Endothelial cell of umbilical vein (primary cell): ENCODE measurements at regions of chr11 and their contacts with region 1.

Region 1: GRCh38 chr11:130894322-130895025 is 21.8 kb downstream of the SNX19 start:
- DNase-seq: peak; percentile 90
- H3K4me3 ChIP-seq: no peak overlapping the region
- H3K27ac ChIP-seq: peak overlapping the region; percentile 13
- H3K4me1 ChIP-seq: peaks cover 57% of the 10 kb centered on the region
- H3K27me3 ChIP-seq: no peaks in the 10 kb centered on the region
- CTCF ChIP-seq: peak; percentile 72 to 86
- POLR2A ChIP-seq: no peak

Region 2: DNA sequence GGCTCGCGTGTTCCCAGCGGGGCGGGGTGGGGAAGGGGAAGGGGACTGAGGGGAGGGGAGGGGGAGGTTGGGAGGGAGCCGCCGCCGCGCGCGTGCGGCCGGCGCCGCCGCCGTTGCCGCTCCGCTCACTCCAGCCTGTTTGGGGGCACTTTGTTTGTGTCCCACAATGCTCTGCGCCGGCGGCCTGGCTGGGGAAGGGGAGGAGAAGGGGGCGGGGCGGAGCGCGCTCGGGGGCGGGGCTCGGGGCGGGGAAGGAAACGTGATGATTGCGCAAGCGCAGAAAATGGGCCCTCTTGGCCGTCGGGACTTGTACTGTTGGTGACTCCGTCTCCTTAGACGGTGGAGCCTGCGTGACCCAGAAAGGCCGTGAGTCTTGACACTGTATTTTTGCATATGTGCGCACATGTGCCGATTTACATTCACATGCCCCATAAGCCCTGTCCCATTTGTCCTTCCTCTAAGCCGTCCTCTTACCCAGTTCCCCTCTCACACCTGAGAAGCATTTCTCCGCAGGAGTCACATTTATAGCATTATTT is 579.7 kb before region 1 on chr11 and contains the start of gene ZBTB44:
- CTCF ChIA-PET with region 1: no interaction called
- POLR2A ChIA-PET with region 1: no interaction called
- dilution Hi-C with region 1: no loop called
- intact Hi-C with region 1: loop called (anchors 10 kb)
- DNase-seq: peak; percentile 85
- H3K4me3 ChIP-seq: peak within 1 kb of the TSS; percentile 51 to 97 (median 71)
- H3K27ac ChIP-seq: peak within 1 kb of the TSS; percentile 53
- H3K4me1 ChIP-seq: peaks cover 11% of the 10 kb centered on the region
- H3K27me3 ChIP-seq: peaks cover 0 to 6% of the 10 kb centered on the region in 2 experiments
- CTCF ChIP-seq: no peak
- POLR2A ChIP-seq: peak; percentile 65
- total RNA-seq, gene ZBTB44: 20.3 and 24.4 TPM in 2 replicates

Region 3: GRCh38 chr11:130827451-130828377 is 66.8 kb before region 1 on chr11:
- CTCF ChIA-PET with region 1: no interaction called
- POLR2A ChIA-PET with region 1: no interaction called
- dilution Hi-C with region 1: no loop called
- intact Hi-C with region 1: loop called (anchors 2 kb)
- DNase-seq: peak; percentile 65
- H3K4me3 ChIP-seq: no peak overlapping the region
- H3K27ac ChIP-seq: no peak overlapping the region
- H3K4me1 ChIP-seq: no peaks in the 10 kb centered on the region
- H3K27me3 ChIP-seq: no peaks in the 10 kb centered on the region
- CTCF ChIP-seq: peak; percentile 41 to 69
- POLR2A ChIP-seq: no peak

Region 4: DNA sequence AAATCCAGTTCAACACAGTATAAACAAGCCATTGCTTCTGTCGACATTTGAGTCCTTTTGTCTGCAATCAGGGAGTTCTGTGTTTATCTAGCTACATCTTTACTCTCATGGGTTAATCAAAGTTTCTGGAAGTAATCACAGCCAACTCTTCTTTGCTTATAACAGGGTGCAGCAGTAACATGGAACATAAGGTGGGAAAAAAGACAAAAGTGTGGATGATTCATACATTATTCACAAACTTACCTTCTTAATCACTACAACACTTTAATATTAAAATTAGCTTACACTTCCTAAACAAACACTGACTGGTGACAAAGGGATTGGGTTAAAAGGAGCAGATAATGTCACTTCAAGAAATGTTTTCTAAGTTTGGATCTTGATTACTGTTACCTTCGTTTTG is 22.9 kb before region 1 on chr11:
- CTCF ChIA-PET with region 1: interaction called, 15 read pairs
- POLR2A ChIA-PET with region 1: no interaction called
- dilution Hi-C with region 1: no loop called
- intact Hi-C with region 1: loop called (anchors 1 kb)
- DNase-seq: no peak
- H3K4me3 ChIP-seq: no peak overlapping the region
- H3K27ac ChIP-seq: no peak overlapping the region
- H3K4me1 ChIP-seq: peaks cover 19% of the 10 kb centered on the region
- H3K27me3 ChIP-seq: no peaks in the 10 kb centered on the region
- CTCF ChIP-seq: no peak
- POLR2A ChIP-seq: no peak

Region 5: GRCh38 chr11:130882138-130882551 is 12.3 kb before region 1 on chr11:
- CTCF ChIA-PET with region 1: interaction called, 15 read pairs
- POLR2A ChIA-PET with region 1: no interaction called
- dilution Hi-C with region 1: no loop called
- intact Hi-C with region 1: loop called (anchors 1 kb)
- DNase-seq: peak; percentile 63
- H3K4me3 ChIP-seq: no peak overlapping the region
- H3K27ac ChIP-seq: peak overlapping the region; percentile 9
- H3K4me1 ChIP-seq: peaks cover 22% of the 10 kb centered on the region
- H3K27me3 ChIP-seq: no peaks in the 10 kb centered on the region
- CTCF ChIP-seq: no peak
- POLR2A ChIP-seq: no peak

Region 6: GRCh38 chr11:130916238-130916855 is 21.9 kb after region 1 on chr11 and contains the start of gene SNX19:
- CTCF ChIA-PET with region 1: interaction called, 58 read pairs
- POLR2A ChIA-PET with region 1: interaction called, 8 read pairs
- dilution Hi-C with region 1: no loop called
- intact Hi-C with region 1: loop called (anchors 1 kb)
- DNase-seq: peak; percentile 92
- H3K4me3 ChIP-seq: peak within 1 kb of the TSS; percentile 34 to 87 (median 51)
- H3K27ac ChIP-seq: peak within 1 kb of the TSS; percentile 76
- H3K4me1 ChIP-seq: peaks cover 12% of the 10 kb centered on the region
- H3K27me3 ChIP-seq: peaks cover 3 to 4% of the 10 kb centered on the region in 2 experiments
- CTCF ChIP-seq: peak; percentile 91 to 97
- POLR2A ChIP-seq: peak; percentile 89
- total RNA-seq, gene SNX19: 44.3 and 49.8 TPM in 2 replicates